ENCODE measurements at regions of chr10 and their contacts with region 1.

Region 1: GRCh38 chr10:68156373-68157185 is 47.3 kb downstream of the MYPN start:
- DNase-seq: peak; percentile 63
- H3K4me3 Mint-ChIP-seq: no peak overlapping the region
- H3K27ac Mint-ChIP-seq: no peak overlapping the region
- H3K4me1 Mint-ChIP-seq: peaks cover 3% of the 10 kb centered on the region
- H3K27me3 Mint-ChIP-seq: no peaks in the 10 kb centered on the region

Region 2: GRCh38 chr10:67849331-67850011 is 307.1 kb before region 1 on chr10:
- CTCF ChIA-PET with region 1: interaction called, 100 read pairs
- POLR2A ChIA-PET with region 1: no interaction called
- DNase-seq: peak; percentile 97
- H3K4me3 Mint-ChIP-seq: peak overlapping the region; percentile 86
- H3K27ac Mint-ChIP-seq: peak overlapping the region; percentile 92
- H3K4me1 Mint-ChIP-seq: peaks cover 19% of the 10 kb centered on the region
- H3K27me3 Mint-ChIP-seq: no peaks in the 10 kb centered on the region

Region 3: GRCh38 chr10:67858971-67859370 is 297.6 kb before region 1 on chr10:
- CTCF ChIA-PET with region 1: interaction called, 100 read pairs
- POLR2A ChIA-PET with region 1: interaction called, 6 read pairs
- DNase-seq: no peak
- H3K4me3 Mint-ChIP-seq: no peak overlapping the region
- H3K27ac Mint-ChIP-seq: no peak overlapping the region
- H3K4me1 Mint-ChIP-seq: peaks cover 5% of the 10 kb centered on the region
- H3K27me3 Mint-ChIP-seq: no peaks in the 10 kb centered on the region

Region 4: GRCh38 chr10:67969875-67970274 is 186.7 kb before region 1 on chr10:
- CTCF ChIA-PET with region 1: no interaction called
- POLR2A ChIA-PET with region 1: no interaction called
- DNase-seq: no peak
- H3K4me3 Mint-ChIP-seq: no peak overlapping the region
- H3K27ac Mint-ChIP-seq: no peak overlapping the region
- H3K4me1 Mint-ChIP-seq: peaks cover 2% of the 10 kb centered on the region
- H3K27me3 Mint-ChIP-seq: no peaks in the 10 kb centered on the region

Region 5: DNA sequence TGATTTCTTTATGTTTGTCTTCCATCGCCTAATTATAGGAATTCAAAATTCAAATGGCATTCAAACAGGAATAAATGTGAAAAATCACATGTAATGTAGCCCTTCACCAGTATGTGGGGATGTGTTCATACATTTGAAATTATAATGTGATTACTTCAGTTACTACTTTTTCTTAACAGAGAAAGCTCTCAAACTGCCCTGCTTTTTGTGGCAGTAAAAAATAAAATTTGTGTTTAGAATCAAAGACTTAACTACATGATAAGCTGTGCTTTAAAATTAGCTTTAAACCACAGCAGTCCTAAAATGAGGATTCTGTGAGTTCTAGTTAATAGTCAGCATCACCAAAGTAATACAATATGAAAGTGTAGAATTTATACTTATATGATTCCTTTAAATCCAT is 73.7 kb before region 1 on chr10:
- CTCF ChIA-PET with region 1: interaction called, 13 read pairs
- POLR2A ChIA-PET with region 1: no interaction called
- DNase-seq: no peak
- H3K4me3 Mint-ChIP-seq: no peak overlapping the region
- H3K27ac Mint-ChIP-seq: no peak overlapping the region
- H3K4me1 Mint-ChIP-seq: peaks cover 7% of the 10 kb centered on the region
- H3K27me3 Mint-ChIP-seq: peaks cover 3% of the 10 kb centered on the region

Region 6: GRCh38 chr10:68121852-68122251 is 34.7 kb before region 1 on chr10:
- CTCF ChIA-PET with region 1: no interaction called
- POLR2A ChIA-PET with region 1: no interaction called
- DNase-seq: no peak
- H3K4me3 Mint-ChIP-seq: no peak overlapping the region
- H3K27ac Mint-ChIP-seq: no peak overlapping the region
- H3K4me1 Mint-ChIP-seq: no peaks in the 10 kb centered on the region
- H3K27me3 Mint-ChIP-seq: peaks cover 5% of the 10 kb centered on the region